ENCODE measurements at regions of chr1 and their contacts with region 1.

Region 1: GRCh38 chr1:33295450-33296081 is 25.3 kb downstream of the A3GALT2 start:
- DNase-seq: peak; percentile 94
- H3K4me3 Mint-ChIP-seq: no peak overlapping the region
- H3K27ac Mint-ChIP-seq: no peak overlapping the region
- H3K4me1 Mint-ChIP-seq: peaks cover 5% of the 10 kb centered on the region
- H3K27me3 Mint-ChIP-seq: no peaks in the 10 kb centered on the region

Region 2: DNA sequence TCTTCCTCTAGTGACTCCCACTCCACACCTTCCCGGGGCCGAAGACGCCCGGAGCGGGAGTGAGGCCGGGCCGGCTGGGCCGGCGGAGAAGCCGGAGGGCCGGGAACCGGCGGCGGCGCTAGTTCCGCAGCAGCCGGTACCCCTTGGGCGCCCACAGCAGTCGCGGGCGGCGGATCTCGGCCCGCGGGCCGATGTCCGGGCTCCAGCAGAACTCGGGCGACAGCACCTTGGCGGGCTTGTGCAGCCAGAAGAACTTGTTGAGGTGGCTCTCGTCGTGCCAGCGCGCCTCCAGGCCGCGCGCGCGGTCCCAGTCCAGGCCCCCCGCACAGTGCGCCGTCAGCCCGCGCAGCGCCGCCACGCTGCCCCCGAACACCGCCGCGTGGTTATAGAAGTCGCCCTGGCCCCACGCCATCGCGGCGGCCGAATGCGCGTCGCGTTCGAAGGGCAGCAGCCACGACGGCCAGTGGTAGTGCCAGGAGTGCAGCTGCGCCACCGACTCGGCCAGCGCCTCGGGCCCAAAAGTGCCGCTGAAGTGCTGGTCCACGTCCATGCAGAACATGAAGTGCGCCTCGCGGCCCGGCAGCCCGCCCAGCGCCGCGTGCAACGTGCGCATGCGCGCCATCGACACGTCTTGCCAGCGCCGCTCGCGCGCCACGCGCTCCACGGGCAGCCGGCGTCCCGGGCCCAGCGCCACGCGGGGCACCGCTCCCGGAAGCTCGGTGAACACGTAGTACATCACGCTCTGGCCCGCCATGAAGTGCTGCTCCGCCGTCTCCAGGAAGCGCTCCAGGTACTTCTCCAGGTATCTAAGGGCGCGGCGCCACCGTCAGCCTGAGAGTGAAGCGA is 11.3 kb after region 1 on chr1:
- CTCF ChIA-PET with region 1: interaction called, 16 read pairs
- POLR2A ChIA-PET with region 1: no interaction called
- intact Hi-C with region 1: no loop called
- DNase-seq: no peak
- H3K4me3 Mint-ChIP-seq: no peak overlapping the region
- H3K27ac Mint-ChIP-seq: no peak overlapping the region
- H3K4me1 Mint-ChIP-seq: peaks cover 14% of the 10 kb centered on the region
- H3K27me3 Mint-ChIP-seq: peaks cover 10% of the 10 kb centered on the region

Region 3: GRCh38 chr1:33349778-33350610 is 54.4 kb after region 1 on chr1:
- CTCF ChIA-PET with region 1: interaction called, 7 read pairs
- POLR2A ChIA-PET with region 1: interaction called, 4 read pairs
- intact Hi-C with region 1: loop called (anchors 5 kb)
- DNase-seq: peak; percentile 84
- H3K4me3 Mint-ChIP-seq: peak overlapping the region; percentile 91
- H3K27ac Mint-ChIP-seq: peak overlapping the region; percentile 94
- H3K4me1 Mint-ChIP-seq: peaks cover 46% of the 10 kb centered on the region
- H3K27me3 Mint-ChIP-seq: no peaks in the 10 kb centered on the region

Region 4: GRCh38 chr1:33367485-33368405 is 72.2 kb after region 1 on chr1:
- CTCF ChIA-PET with region 1: interaction called, 103 read pairs
- POLR2A ChIA-PET with region 1: no interaction called
- intact Hi-C with region 1: loop called (anchors 1 kb)
- DNase-seq: peak; percentile 88
- H3K4me3 Mint-ChIP-seq: no peak overlapping the region
- H3K27ac Mint-ChIP-seq: no peak overlapping the region
- H3K4me1 Mint-ChIP-seq: no peaks in the 10 kb centered on the region
- H3K27me3 Mint-ChIP-seq: no peaks in the 10 kb centered on the region

Region 5: DNA sequence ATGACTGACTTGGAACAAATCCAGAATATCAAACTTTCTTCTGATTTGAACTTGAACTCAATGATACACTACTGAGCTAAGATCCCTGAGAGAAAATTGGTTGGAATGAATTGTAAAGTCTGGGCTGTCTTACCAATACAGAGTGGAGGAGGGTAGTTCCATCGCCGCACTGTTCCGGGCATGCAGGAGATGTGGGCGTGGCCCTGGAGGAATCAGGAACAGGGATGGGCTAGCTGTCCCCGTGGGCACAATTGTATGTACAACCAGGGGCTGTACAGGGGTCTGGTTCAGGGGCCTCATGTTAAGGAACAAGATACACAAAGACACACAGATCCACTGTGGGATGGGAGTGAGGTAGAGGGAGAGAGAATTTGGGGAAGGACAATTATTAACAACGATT is 321.2 kb after region 1 on chr1:
- CTCF ChIA-PET with region 1: interaction called, 11 read pairs
- POLR2A ChIA-PET with region 1: no interaction called
- intact Hi-C with region 1: no loop called
- DNase-seq: no peak
- H3K4me3 Mint-ChIP-seq: no peak overlapping the region
- H3K27ac Mint-ChIP-seq: no peak overlapping the region
- H3K4me1 Mint-ChIP-seq: no peaks in the 10 kb centered on the region
- H3K27me3 Mint-ChIP-seq: peaks cover 28% of the 10 kb centered on the region